ENCODE measurements at regions of chr11 and their contacts with region 1.

Region 1: GRCh38 chr11:14300661-14301304 is 58.2 kb downstream of the RRAS2 start:
- DNase-seq: peak; percentile 10 to 77 (median 44)
- ATAC-seq: peak; percentile 93
- H3K4me3 ChIP-seq: no peak overlapping the region
- H3K4me3 Mint-ChIP-seq: no peak overlapping the region
- H3K27ac ChIP-seq: no peak overlapping the region
- H3K27ac Mint-ChIP-seq: no peak overlapping the region
- H3K4me1 ChIP-seq: peaks cover 6% of the 10 kb centered on the region
- H3K4me1 Mint-ChIP-seq: peaks cover 22% of the 10 kb centered on the region
- H3K27me3 ChIP-seq: no peaks in the 10 kb centered on the region
- H3K27me3 Mint-ChIP-seq: no peaks in the 10 kb centered on the region
- CTCF ChIP-seq: peak; percentile 66

Region 2: GRCh38 chr11:14413307-14414069 is 112.7 kb after region 1 on chr11:
- CTCF ChIA-PET with region 1: interaction called, 7 read pairs
- POLR2A ChIA-PET with region 1: no interaction called
- intact Hi-C with region 1: loop called in 1 of 2 experiments (anchors 5 kb)
- DNase-seq: peak in 2 of 9 experiments; percentile 13 to 18
- ATAC-seq: no peak
- H3K4me3 ChIP-seq: no peak overlapping the region
- H3K4me3 Mint-ChIP-seq: no peak overlapping the region
- H3K27ac ChIP-seq: no peak overlapping the region
- H3K27ac Mint-ChIP-seq: no peak overlapping the region
- H3K4me1 ChIP-seq: peaks cover 24% of the 10 kb centered on the region
- H3K4me1 Mint-ChIP-seq: peaks cover 49% of the 10 kb centered on the region
- H3K27me3 ChIP-seq: no peaks in the 10 kb centered on the region
- H3K27me3 Mint-ChIP-seq: no peaks in the 10 kb centered on the region
- CTCF ChIP-seq: no peak

Region 3: DNA sequence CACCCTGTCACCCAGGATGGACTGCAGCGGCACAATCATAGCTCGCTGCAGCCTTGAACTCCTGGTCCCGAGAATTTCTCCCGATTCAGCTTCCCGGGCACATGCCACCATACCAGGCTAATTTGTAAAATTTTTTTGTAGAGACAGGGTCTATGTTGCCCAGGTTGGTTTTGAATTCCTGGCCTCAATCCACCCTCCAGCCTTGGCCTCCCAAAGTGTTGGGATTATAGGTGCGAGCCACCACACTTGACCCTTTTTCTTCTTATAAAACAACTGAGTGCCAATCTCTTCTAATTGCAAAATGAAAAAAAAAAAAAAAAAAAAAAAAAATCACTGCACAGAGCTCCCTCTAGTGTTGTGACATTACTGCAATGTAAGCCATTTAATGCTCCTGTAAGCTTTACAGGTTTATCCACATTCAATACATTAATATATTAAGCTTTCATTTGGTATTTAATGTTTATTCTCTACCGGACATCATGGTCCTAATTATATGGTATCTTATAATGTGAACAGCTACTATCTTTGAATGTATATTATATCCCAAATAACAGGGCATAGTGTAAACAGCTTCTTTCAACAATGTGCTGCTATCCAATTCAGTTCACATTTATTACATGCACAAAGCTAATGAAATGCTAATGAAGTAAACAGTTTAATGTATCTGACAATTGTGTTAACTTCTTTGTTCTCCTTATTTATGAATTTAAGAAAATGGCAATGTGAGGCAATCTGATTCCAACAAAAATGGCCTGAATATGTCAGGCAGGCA is 154.3 kb after region 1 on chr11:
- CTCF ChIA-PET with region 1: interaction called, 127 read pairs
- POLR2A ChIA-PET with region 1: interaction called, 10 read pairs
- intact Hi-C with region 1: loop called (anchors 1 kb)
- DNase-seq: peak in 2 of 9 experiments; percentile 50 to 61
- ATAC-seq: peak; percentile 52
- H3K4me3 ChIP-seq: no peak overlapping the region
- H3K4me3 Mint-ChIP-seq: no peak overlapping the region
- H3K27ac ChIP-seq: no peak overlapping the region
- H3K27ac Mint-ChIP-seq: no peak overlapping the region
- H3K4me1 ChIP-seq: no peaks in the 10 kb centered on the region
- H3K4me1 Mint-ChIP-seq: no peaks in the 10 kb centered on the region
- H3K27me3 ChIP-seq: no peaks in the 10 kb centered on the region
- H3K27me3 Mint-ChIP-seq: no peaks in the 10 kb centered on the region
- CTCF ChIP-seq: peak; percentile 75

Region 4: GRCh38 chr11:14463623-14464022 is 162.8 kb after region 1 on chr11:
- CTCF ChIA-PET with region 1: interaction called, 13 read pairs
- POLR2A ChIA-PET with region 1: no interaction called
- intact Hi-C with region 1: no loop called
- DNase-seq: no peak
- ATAC-seq: no peak
- H3K4me3 ChIP-seq: no peak overlapping the region
- H3K4me3 Mint-ChIP-seq: no peak overlapping the region
- H3K27ac ChIP-seq: peak overlapping the region in 1 of 2 experiments; percentile 3
- H3K27ac Mint-ChIP-seq: no peak overlapping the region
- H3K4me1 ChIP-seq: peaks cover 1% of the 10 kb centered on the region
- H3K4me1 Mint-ChIP-seq: peaks cover 13% of the 10 kb centered on the region
- H3K27me3 ChIP-seq: no peaks in the 10 kb centered on the region
- H3K27me3 Mint-ChIP-seq: no peaks in the 10 kb centered on the region
- CTCF ChIP-seq: no peak

Region 5: DNA sequence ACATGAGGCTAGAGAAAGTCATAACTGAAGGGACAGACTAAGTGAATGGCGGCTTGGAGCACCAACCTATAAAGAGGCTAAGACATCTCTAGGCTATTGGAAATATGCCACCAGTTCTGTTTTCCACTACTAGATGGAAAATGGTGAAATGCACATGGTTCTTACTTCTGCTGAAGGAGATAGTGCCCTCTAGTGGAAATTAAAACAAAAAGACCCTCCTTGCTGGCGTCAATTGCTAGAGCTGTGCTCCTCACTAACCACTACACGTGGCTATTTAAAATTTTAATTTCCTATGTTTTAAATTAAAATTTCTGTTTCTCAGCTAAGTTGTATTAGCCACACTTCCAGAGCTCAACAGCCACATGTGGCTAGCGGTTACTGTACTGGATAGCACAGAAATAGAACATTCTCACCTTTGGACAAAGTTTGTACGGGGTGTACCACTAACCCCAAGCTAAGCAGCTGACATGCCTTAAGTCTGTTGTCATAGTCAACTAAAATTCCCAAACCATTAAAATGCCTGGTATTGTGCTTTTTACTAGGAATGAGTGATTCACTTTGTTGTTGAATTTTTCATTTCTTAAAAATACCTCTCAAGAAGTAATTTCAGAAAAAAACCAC is 705.5 kb after region 1 on chr11:
- CTCF ChIA-PET with region 1: interaction called, 4 read pairs
- POLR2A ChIA-PET with region 1: no interaction called
- intact Hi-C with region 1: loop called in 1 of 2 experiments (anchors 10 kb)
- DNase-seq: peak in 3 of 9 experiments; percentile 13 to 61 (median 50)
- ATAC-seq: peak; percentile 34
- H3K4me3 ChIP-seq: no peak overlapping the region
- H3K4me3 Mint-ChIP-seq: no peak overlapping the region
- H3K27ac ChIP-seq: no peak overlapping the region
- H3K27ac Mint-ChIP-seq: no peak overlapping the region
- H3K4me1 ChIP-seq: no peaks in the 10 kb centered on the region
- H3K4me1 Mint-ChIP-seq: no peaks in the 10 kb centered on the region
- H3K27me3 ChIP-seq: no peaks in the 10 kb centered on the region
- H3K27me3 Mint-ChIP-seq: peaks cover 34% of the 10 kb centered on the region
- CTCF ChIP-seq: peak; percentile 56

Region 6: GRCh38 chr11:15074206-15075161 is 773.7 kb after region 1 on chr11:
- CTCF ChIA-PET with region 1: no interaction called
- POLR2A ChIA-PET with region 1: no interaction called
- intact Hi-C with region 1: loop called in 1 of 2 experiments (anchors 10 kb)
- DNase-seq: peak; percentile 64 to 89 (median 80)
- ATAC-seq: peak; percentile 91
- H3K4me3 ChIP-seq: peak overlapping the region; percentile 39 to 60
- H3K4me3 Mint-ChIP-seq: peak overlapping the region; percentile 84
- H3K27ac ChIP-seq: no peak overlapping the region
- H3K27ac Mint-ChIP-seq: no peak overlapping the region
- H3K4me1 ChIP-seq: peaks cover 18% of the 10 kb centered on the region
- H3K4me1 Mint-ChIP-seq: peaks cover 12% of the 10 kb centered on the region
- H3K27me3 ChIP-seq: peaks cover 9 to 16% of the 10 kb centered on the region in 2 experiments
- H3K27me3 Mint-ChIP-seq: peaks cover 27% of the 10 kb centered on the region
- CTCF ChIP-seq: peak; percentile 79

Region 7: DNA sequence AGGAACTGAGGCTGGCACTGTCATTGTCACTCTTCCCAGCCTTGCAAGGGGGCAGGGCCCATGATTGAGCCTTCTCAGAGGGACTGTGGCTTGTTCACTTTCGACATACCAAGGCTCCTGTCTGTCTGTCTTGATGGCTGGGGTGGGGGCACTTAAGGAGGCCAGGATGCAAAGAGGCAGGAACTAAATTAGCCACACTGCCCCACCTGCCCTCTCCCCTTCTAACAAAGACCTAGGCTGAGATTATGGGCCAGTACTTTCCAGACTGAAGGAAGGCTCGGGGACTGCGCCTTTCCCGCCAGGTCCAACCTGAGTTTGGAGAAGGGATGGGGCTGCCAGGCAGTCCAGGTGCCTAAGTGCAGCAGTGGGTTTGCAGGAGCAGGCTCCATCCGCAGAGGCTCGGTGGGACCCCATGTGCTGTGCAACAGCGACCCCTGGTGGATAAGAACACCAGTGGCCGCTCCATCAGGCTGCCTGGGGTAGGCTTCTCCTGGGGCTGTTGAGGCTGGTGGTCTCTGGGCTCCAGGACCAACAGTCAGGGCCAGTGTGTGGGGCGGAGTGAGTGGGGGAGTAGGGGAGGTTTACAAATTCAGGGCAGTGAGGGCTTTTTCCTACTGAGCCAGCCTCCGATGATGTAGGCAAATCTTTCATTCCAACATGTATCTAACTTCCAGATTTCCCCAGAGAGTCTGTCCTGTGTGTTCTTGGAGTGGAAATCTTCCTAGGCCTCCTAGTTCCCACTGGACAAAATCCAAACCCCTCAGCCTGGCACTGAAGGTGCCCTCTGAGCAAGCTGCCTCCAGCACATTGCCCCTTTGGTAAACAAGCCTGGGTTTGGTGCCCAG is 907.8 kb after region 1 on chr11:
- CTCF ChIA-PET with region 1: interaction called, 3 read pairs
- POLR2A ChIA-PET with region 1: no interaction called
- intact Hi-C with region 1: loop called in 1 of 2 experiments (anchors 2 kb)
- DNase-seq: peak; percentile 53 to 85 (median 73)
- ATAC-seq: peak; percentile 73
- H3K4me3 ChIP-seq: no peak overlapping the region
- H3K4me3 Mint-ChIP-seq: no peak overlapping the region
- H3K27ac ChIP-seq: no peak overlapping the region
- H3K27ac Mint-ChIP-seq: no peak overlapping the region
- H3K4me1 ChIP-seq: no peaks in the 10 kb centered on the region
- H3K4me1 Mint-ChIP-seq: no peaks in the 10 kb centered on the region
- H3K27me3 ChIP-seq: no peaks in the 10 kb centered on the region
- H3K27me3 Mint-ChIP-seq: peaks cover 3% of the 10 kb centered on the region
- CTCF ChIP-seq: peak; percentile 75